Activated CD4-positive, alpha-beta memory T cell treated with anti-CD3 and anti-CD28 coated beads for 36 hours (primary cell): ENCODE measurements at regions of chr6 and their contacts with region 1.

Region 1: DNA sequence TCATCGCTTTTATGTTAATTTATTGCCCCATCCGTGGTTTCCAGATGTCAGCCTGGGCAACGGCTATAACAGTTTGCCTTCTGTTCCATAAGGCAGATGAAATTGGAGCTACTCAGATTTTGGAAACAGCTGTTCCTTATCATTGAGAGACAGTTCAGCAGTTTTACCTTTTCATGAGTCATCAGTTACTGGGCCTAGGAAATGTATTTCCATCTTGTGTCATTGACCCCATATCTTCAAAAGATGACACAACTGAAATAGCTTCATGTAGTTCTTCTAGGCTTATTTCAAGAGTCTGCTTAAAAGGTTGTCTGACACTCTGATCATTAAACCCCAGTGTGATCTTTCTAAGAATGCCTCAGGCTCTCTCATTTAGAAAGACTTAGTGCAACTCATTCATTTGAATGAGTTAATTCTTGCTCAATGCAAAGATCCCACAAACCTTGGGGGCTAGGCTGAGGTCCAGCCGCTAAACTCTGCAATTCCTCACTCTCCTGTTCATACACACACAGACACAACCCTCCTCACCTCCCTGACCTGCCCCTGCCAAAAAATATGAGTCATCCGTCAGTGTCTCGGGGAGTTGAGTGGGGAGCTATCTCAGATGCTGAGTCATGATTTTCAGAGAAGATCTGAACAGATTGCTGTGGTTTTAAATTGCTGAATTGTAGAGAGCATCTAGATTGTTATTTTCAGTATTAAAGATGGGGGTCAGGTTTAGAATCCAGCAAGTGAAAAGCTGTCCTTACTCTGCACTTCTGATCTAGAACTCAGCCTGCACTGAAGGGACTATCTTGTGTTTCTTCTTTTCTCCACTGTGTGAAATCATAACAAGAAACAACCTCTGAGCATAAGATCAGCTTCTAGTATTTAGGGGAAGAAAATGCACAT is 61.8 kb downstream of the RPP40 start:
- DNase-seq: peak; percentile 78
- H3K4me3 Mint-ChIP-seq: no peak overlapping the region
- H3K27ac Mint-ChIP-seq: peak overlapping the region; percentile 83
- H3K4me1 Mint-ChIP-seq: peaks cover 52% of the 10 kb centered on the region
- H3K27me3 Mint-ChIP-seq: no peaks in the 10 kb centered on the region

Region 2: DNA sequence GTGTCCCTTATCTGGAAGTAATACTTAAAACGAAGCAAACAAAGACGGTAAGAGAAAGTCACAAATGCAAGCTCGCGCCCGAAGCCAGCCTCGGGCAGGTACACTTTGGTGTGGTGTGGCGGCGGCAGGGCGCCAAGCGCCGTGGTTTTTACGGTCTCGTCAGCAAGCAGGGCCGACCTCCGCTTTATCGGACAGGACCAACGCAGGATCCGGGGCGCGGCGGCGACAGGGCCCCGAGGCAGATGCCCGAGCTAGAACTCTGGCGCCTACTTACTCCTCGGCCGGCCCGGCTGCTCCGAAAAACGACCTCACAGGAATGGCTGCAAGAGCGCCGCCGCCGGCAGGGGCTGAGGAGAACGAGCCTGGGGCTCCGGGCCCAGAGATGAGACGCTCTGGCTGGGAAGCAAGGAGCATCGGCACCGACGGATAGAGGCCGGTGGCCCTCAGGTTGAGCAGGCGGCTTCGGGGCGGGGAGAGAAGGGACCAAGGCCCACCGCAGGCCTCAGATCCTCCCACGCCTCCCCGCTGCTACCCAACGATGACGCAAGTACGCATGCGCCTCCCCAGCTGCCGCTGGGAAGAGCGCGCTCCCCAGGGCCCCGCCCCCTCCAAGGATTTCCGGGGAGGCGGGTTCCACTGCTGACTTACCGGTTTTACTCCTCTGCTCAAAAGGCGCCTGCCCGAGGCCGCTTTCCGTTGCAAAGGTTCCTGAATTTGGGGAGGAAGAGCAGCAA is 923.7 kb before region 1 on chr6:
- CTCF ChIA-PET with region 1: no interaction called
- POLR2A ChIA-PET with region 1: no interaction called
- intact Hi-C with region 1: loop called (anchors 1 kb)
- DNase-seq: peak; percentile 98
- H3K4me3 Mint-ChIP-seq: peak overlapping the region; percentile 90
- H3K27ac Mint-ChIP-seq: peak overlapping the region; percentile 97
- H3K4me1 Mint-ChIP-seq: peaks cover 63% of the 10 kb centered on the region
- H3K27me3 Mint-ChIP-seq: no peaks in the 10 kb centered on the region

Region 3: DNA sequence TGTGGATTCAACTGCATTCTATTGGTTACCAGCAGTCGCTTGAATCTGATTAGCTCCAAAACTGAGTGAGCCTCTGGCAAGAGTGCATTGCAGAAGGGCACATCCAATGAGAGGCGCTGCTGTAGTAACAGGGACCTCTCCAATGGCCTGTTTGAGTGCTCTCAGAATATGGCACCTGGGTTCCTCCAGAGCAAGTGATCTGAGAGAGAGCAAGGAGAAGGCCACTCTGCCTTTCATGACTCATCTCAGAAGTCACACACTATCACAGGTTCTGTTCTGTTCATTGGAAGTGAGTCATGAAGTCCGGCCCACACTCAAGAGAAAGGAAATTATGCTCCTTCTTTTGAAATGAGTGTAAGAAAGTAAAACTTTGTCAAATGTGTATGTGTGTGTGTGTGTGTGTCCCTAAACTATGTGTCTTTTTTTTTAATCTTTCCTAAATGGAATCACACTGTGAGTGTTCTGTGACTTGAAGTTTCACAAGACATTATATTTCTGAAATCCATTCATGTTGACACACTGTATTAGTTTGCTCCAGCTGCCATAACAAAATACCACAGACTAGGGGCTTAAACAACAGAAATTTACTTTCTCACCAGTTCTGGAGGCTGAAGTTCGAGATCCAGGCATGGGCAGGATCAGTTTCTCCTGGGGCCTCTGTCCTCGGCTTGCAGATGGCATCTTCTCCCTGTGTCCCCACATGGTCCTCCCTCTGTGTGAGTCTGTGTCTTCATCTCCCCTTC is 304.2 kb before region 1 on chr6:
- CTCF ChIA-PET with region 1: interaction called, 3 read pairs
- POLR2A ChIA-PET with region 1: interaction called, 3 read pairs
- intact Hi-C with region 1: loop called (anchors 1 kb)
- DNase-seq: peak; percentile 61
- H3K4me3 Mint-ChIP-seq: no peak overlapping the region
- H3K27ac Mint-ChIP-seq: peak overlapping the region; percentile 51
- H3K4me1 Mint-ChIP-seq: peaks cover 21% of the 10 kb centered on the region
- H3K27me3 Mint-ChIP-seq: peaks cover 24% of the 10 kb centered on the region

Region 4: GRCh38 chr6:4717856-4718255 is 224.2 kb before region 1 on chr6:
- CTCF ChIA-PET with region 1: no interaction called
- POLR2A ChIA-PET with region 1: no interaction called
- intact Hi-C with region 1: no loop called
- DNase-seq: no peak
- H3K4me3 Mint-ChIP-seq: no peak overlapping the region
- H3K27ac Mint-ChIP-seq: no peak overlapping the region
- H3K4me1 Mint-ChIP-seq: no peaks in the 10 kb centered on the region
- H3K27me3 Mint-ChIP-seq: peaks cover 2% of the 10 kb centered on the region

Region 5: DNA sequence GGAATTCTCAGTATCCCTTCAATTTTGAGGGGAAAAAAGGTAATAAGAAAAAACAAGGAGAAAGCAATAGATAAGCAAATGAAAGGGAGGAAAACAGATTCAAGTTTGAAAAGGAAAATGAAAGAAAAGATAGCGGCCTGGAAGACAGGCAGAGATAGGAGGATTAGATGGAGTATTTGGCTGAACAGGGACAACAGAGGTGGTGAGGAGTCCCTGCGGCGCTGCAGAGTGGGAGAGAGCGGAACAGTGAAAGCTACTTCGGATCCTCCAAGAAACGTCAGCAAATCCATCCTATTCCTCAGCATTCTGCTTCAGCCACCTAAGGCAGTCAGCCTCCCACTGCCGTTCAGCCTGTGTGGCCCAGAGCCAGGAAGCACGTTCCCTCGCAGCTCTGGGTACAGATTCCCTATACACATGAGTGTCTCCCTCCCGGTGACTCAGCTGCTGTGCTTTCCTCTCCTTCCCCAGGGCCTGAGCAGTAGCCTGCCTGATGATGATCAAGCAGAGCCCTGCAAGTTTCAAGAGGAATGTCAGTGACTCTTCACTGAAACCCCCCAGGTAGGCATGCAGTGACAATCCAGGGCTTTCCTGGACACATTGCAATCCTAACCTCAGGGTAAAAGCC is 209.2 kb before region 1 on chr6:
- CTCF ChIA-PET with region 1: no interaction called
- POLR2A ChIA-PET with region 1: no interaction called
- intact Hi-C with region 1: no loop called
- DNase-seq: no peak
- H3K4me3 Mint-ChIP-seq: no peak overlapping the region
- H3K27ac Mint-ChIP-seq: no peak overlapping the region
- H3K4me1 Mint-ChIP-seq: peaks cover 2% of the 10 kb centered on the region
- H3K27me3 Mint-ChIP-seq: peaks cover 18% of the 10 kb centered on the region

Region 6: GRCh38 chr6:4820704-4821276 is 121.2 kb before region 1 on chr6:
- CTCF ChIA-PET with region 1: no interaction called
- POLR2A ChIA-PET with region 1: interaction called, 3 read pairs
- intact Hi-C with region 1: loop called (anchors 1 kb)
- DNase-seq: peak; percentile 57
- H3K4me3 Mint-ChIP-seq: no peak overlapping the region
- H3K27ac Mint-ChIP-seq: no peak overlapping the region
- H3K4me1 Mint-ChIP-seq: peaks cover 36% of the 10 kb centered on the region
- H3K27me3 Mint-ChIP-seq: no peaks in the 10 kb centered on the region

Region 7: DNA sequence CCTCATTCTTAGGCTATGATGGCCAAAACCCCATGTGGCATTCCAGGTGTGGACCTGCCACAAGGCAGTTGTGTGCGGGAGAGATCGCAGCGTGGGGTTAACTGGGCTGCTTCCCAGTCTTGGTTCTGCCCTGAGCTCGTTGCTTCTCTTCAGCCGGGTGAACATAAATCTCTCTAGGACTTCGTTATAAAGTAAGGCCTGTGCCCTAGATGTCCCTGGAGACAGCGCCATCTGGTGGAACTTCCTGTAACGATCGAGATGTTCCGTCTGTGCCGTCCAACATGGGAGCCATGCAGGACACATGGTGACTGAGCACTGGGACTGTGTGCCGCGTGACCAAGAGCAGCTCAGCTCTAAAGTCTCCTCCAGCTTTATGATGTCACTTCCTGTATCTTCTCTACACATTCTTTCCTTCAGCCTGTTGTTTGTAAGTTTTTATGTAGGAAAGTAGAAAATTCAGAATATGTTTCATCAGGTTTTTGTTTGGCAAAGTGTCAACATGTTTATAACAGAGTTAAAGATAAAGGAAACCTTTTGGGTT is 88.6 kb after region 1 on chr6:
- CTCF ChIA-PET with region 1: interaction called, 3 read pairs
- POLR2A ChIA-PET with region 1: no interaction called
- intact Hi-C with region 1: loop called (anchors 1 kb)
- DNase-seq: peak; percentile 88
- H3K4me3 Mint-ChIP-seq: no peak overlapping the region
- H3K27ac Mint-ChIP-seq: no peak overlapping the region
- H3K4me1 Mint-ChIP-seq: peaks cover 9% of the 10 kb centered on the region
- H3K27me3 Mint-ChIP-seq: peaks cover 3% of the 10 kb centered on the region